Activated B cell treated with CpG ODN at 0.5 μM for 24 hours (primary cell): ENCODE measurements at regions of chr19 and their contacts with region 1.

Region 1: GRCh38 chr19:57435062-57435978 is at the start of gene ZNF749:
- DNase-seq: peak; percentile 84
- ATAC-seq: peak; percentile 99
- H3K4me3 Mint-ChIP-seq: peak within 1 kb of the TSS; percentile 97
- H3K27ac Mint-ChIP-seq: peak within 1 kb of the TSS; percentile 84
- H3K4me1 Mint-ChIP-seq: peaks cover 25% of the 10 kb centered on the region
- H3K27me3 Mint-ChIP-seq: no peaks in the 10 kb centered on the region
- CTCF ChIP-seq: no peak
- total RNA-seq, gene ZNF749: 16.4 and 18.2 TPM in 2 replicates

Region 2: GRCh38 chr19:57320180-57321084 is 114.9 kb before region 1 on chr19 and contains the start of gene ZNF543:
- CTCF ChIA-PET with region 1: no interaction called
- POLR2A ChIA-PET with region 1: no interaction called
- intact Hi-C with region 1: loop called (anchors 1 kb)
- DNase-seq: peak; percentile 90
- ATAC-seq: peak; percentile 97
- H3K4me3 Mint-ChIP-seq: peak within 1 kb of the TSS; percentile 95
- H3K27ac Mint-ChIP-seq: peak within 1 kb of the TSS; percentile 98
- H3K4me1 Mint-ChIP-seq: peaks cover 30% of the 10 kb centered on the region
- H3K27me3 Mint-ChIP-seq: peaks cover 17% of the 10 kb centered on the region
- CTCF ChIP-seq: no peak
- total RNA-seq, gene ZNF543: 14.0 and 16.1 TPM in 2 replicates

Region 3: DNA sequence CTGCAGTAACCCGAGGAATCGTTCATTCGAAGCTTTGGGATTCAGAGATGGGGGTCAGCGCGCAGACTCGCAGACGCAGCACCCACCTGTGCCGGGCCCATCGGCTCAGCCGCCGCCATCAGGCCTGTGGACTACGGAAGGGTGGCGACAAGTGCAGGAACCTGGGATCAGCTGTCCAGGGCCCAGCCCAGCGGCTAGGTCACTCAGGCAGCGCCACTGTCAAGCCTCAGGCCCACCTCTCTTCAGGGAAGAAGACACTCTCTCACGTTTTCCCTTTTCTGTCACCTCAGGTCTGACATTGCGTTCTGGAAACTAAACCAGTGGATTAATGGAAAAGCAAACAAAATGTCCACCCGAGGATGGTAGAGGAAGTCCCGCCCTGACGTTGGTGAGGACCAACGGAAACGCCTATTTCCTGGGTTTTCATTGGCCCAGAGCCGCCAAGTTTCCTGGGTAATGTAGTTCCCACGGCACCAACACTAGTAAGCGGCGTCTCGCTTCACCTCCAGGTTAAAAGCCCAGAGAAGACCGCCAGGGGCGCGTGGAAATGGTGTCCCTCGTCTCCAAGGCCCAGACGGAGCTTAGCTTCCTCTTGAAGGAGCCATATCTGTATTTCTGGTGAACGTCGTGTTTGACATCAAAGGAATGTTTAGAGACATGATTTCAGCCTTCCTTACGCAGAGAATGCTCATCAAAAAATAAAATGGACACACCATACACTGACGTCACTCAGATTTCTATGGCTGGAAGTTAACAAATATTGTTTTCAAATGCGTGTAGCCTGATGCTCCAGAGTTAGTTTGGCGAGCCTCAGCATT is 42.1 kb after region 1 on chr19 and contains the start of gene ZNF772:
- CTCF ChIA-PET with region 1: no interaction called
- POLR2A ChIA-PET with region 1: no interaction called
- intact Hi-C with region 1: loop called (anchors 1 kb)
- DNase-seq: peak; percentile 68
- ATAC-seq: peak; percentile 98
- H3K4me3 Mint-ChIP-seq: peak within 1 kb of the TSS; percentile 91
- H3K27ac Mint-ChIP-seq: peak within 1 kb of the TSS; percentile 90
- H3K4me1 Mint-ChIP-seq: peaks cover 29% of the 10 kb centered on the region
- H3K27me3 Mint-ChIP-seq: no peaks in the 10 kb centered on the region
- CTCF ChIP-seq: no peak
- total RNA-seq, gene ZNF772: 13.8 and 17.9 TPM in 2 replicates

Region 4: GRCh38 chr19:57559404-57560025 is 124.2 kb after region 1 on chr19 and contains the start of gene ZNF550:
- CTCF ChIA-PET with region 1: no interaction called
- POLR2A ChIA-PET with region 1: no interaction called
- intact Hi-C with region 1: loop called (anchors 1 kb)
- DNase-seq: peak; percentile 83
- ATAC-seq: peak; percentile 98
- H3K4me3 Mint-ChIP-seq: peak within 1 kb of the TSS; percentile 92
- H3K27ac Mint-ChIP-seq: peak within 1 kb of the TSS; percentile 69
- H3K4me1 Mint-ChIP-seq: peaks cover 33% of the 10 kb centered on the region
- H3K27me3 Mint-ChIP-seq: no peaks in the 10 kb centered on the region
- CTCF ChIP-seq: no peak
- total RNA-seq, gene ZNF550: 16.8 and 18.7 TPM in 2 replicates